Caco-2 (cell line): ENCODE measurements at regions of chr4 and their contacts with region 1.

Region 1: GRCh38 chr4:184745831-184746795 is 12.2 kb upstream of the CENPU start:
- DNase-seq: peak; percentile 75 to 80
- H3K4me3 ChIP-seq: no peak overlapping the region
- H3K4me3 Mint-ChIP-seq: peak overlapping the region; percentile 56
- H3K27ac Mint-ChIP-seq: peak overlapping the region; percentile 96
- H3K4me1 ChIP-seq: peaks cover 47% of the 10 kb centered on the region
- H3K4me1 Mint-ChIP-seq: peaks cover 36% of the 10 kb centered on the region
- H3K27me3 ChIP-seq: no peaks in the 10 kb centered on the region
- H3K27me3 Mint-ChIP-seq: no peaks in the 10 kb centered on the region
- CTCF ChIP-seq: peak; percentile 74 to 75

Region 2: DNA sequence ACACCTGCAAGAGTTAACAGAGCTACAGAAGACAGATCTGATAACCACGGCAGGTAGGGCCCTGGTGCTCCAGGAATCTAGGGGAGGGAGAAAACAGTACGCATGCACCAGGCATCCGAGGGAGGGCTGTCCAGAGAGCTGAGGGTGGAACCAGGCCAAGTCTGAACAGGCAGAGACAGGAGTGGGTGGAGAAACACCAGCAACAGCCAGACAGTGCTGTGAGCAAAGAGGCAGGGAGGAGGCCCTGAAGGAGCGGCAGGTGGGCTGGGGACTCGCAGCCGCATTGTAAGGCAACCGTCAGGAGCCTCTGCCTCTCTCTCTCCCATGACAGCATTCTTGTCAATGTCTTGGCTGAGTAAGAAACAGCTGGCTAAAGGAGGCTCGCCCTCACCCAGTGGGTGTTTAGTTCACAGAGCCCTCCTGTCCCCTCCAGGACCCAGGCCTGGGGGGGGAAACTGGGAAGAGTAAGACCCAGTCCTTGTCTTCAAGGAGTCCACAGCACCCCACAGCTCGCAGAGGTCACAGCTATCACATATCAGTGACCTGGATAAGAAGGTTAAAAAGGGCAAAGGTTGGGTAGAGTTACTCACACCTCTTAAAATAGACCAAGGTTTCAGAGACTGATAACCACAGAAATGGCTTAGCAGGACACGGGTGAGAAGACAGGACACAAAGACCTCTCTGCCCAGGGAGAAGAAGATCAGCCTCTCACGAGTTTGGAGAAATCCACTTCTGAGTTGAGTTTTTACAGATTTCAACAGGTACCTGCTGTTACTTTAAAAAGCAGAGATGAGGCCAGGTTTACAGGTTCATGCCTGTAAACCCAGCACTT is 69.1 kb after region 1 on chr4:
- CTCF ChIA-PET with region 1: interaction called, 6 read pairs
- POLR2A ChIA-PET with region 1: no interaction called
- intact Hi-C with region 1: loop called (anchors 2 kb)
- DNase-seq: peak; percentile 92 to 95
- H3K4me3 ChIP-seq: peak overlapping the region; percentile 6
- H3K4me3 Mint-ChIP-seq: peak overlapping the region; percentile 71
- H3K27ac Mint-ChIP-seq: peak overlapping the region; percentile 95
- H3K4me1 ChIP-seq: peaks cover 60% of the 10 kb centered on the region
- H3K4me1 Mint-ChIP-seq: peaks cover 49% of the 10 kb centered on the region
- H3K27me3 ChIP-seq: no peaks in the 10 kb centered on the region
- H3K27me3 Mint-ChIP-seq: no peaks in the 10 kb centered on the region
- CTCF ChIP-seq: no peak

Region 3: DNA sequence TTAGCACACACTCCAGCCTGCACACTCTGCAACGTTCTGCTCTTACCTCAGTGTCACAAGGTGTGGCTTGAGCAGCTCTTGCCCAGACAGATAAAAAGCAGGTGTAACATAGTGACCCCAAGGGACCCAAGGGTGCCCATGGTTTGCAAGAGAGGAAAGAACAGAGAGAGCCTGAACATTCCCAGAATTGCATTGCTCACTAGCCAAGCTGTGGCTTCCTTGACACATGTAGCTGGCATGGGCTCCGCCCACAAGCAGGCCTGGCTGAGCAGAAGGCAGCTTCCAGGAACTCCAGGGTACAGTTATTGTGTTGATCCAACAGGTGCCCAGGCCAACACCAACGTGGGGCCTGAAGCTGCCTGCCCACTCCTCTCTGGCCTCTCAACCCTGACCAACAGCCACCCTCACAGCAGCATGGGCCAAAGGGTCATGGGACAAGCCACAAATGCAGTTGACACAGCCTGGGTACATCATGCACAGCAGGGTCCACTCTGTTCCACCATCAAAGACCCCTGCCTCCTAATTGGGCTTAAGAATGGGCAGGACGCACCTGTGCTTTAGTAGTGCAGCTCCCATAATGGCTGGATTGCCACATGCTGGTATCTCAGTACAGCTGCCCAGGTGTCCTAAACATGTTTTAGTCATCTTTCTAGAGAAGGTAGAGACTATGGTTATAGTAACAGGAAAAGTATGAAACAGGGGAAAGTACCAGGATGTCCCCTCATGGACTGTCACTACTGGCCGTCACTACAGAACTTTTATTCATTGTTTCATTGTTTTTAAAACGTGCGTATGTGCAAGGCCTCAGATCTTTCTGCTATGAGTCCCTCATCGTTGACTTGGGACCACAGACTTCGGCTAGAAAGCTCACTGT is 153.4 kb after region 1 on chr4:
- CTCF ChIA-PET with region 1: no interaction called
- POLR2A ChIA-PET with region 1: no interaction called
- intact Hi-C with region 1: loop called (anchors 10 kb)
- DNase-seq: no peak
- H3K4me3 ChIP-seq: no peak overlapping the region
- H3K4me3 Mint-ChIP-seq: no peak overlapping the region
- H3K27ac Mint-ChIP-seq: no peak overlapping the region
- H3K4me1 ChIP-seq: no peaks in the 10 kb centered on the region; the same call in 1 of the 2 replicates
- H3K4me1 Mint-ChIP-seq: peaks cover 8% of the 10 kb centered on the region
- H3K27me3 ChIP-seq: no peaks in the 10 kb centered on the region
- H3K27me3 Mint-ChIP-seq: no peaks in the 10 kb centered on the region
- CTCF ChIP-seq: no peak

Region 4: DNA sequence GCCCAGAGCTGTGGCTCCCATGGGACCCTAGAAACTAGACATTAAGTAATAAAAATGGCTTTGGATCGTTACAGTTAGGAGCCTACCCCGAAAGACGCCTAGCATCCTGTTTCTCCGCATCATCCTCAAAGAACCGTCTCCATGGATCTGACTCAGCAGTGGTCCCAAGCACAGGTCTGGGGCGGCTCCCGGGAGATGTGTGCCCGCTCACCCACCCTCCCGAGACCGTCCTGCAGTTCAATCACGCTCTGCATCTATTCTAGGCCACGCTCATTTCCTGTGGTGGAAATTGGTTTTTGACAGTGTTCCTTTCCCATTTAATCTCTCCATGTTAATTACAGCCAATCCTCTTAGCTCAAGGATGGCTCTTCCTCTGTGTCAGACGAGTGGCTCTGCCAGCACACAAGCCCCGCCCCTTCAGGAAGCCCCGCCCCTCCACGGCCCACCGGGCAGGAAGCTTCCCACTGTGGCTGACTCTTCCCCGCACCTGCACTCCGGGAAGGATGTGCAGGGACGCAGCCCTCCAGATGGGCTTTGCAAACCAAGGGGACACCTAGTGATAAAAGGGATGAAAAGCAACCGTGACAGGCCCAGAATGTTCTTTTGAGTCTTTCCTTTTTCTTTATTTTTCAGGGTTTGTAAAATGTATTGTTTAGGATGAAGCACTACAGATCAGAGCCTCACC is 237.7 kb after region 1 on chr4:
- CTCF ChIA-PET with region 1: interaction called, 9 read pairs
- POLR2A ChIA-PET with region 1: no interaction called
- intact Hi-C with region 1: loop called (anchors 1 kb)
- DNase-seq: peak; percentile 74 to 79
- H3K4me3 ChIP-seq: no peak overlapping the region
- H3K4me3 Mint-ChIP-seq: no peak overlapping the region
- H3K27ac Mint-ChIP-seq: no peak overlapping the region
- H3K4me1 ChIP-seq: no peaks in the 10 kb centered on the region
- H3K4me1 Mint-ChIP-seq: no peaks in the 10 kb centered on the region
- H3K27me3 ChIP-seq: no peaks in the 10 kb centered on the region
- H3K27me3 Mint-ChIP-seq: no peaks in the 10 kb centered on the region
- CTCF ChIP-seq: peak; percentile 39 to 44

Region 5: GRCh38 chr4:185011408-185011807 is 265.3 kb after region 1 on chr4:
- CTCF ChIA-PET with region 1: interaction called, 9 read pairs
- POLR2A ChIA-PET with region 1: no interaction called
- intact Hi-C with region 1: loop called (anchors 2 kb)
- DNase-seq: peak in 1 of 2 experiments; percentile 64
- H3K4me3 ChIP-seq: no peak overlapping the region
- H3K4me3 Mint-ChIP-seq: no peak overlapping the region
- H3K27ac Mint-ChIP-seq: no peak overlapping the region
- H3K4me1 ChIP-seq: no peaks in the 10 kb centered on the region
- H3K4me1 Mint-ChIP-seq: no peaks in the 10 kb centered on the region
- H3K27me3 ChIP-seq: no peaks in the 10 kb centered on the region; the same call in none of the 2 replicates
- H3K27me3 Mint-ChIP-seq: peaks cover 28% of the 10 kb centered on the region
- CTCF ChIP-seq: peak; percentile 64 to 73